Mammary epithelial cell (primary cell): ENCODE measurements at regions of chr4 and their contacts with region 1.

Region 1: DNA sequence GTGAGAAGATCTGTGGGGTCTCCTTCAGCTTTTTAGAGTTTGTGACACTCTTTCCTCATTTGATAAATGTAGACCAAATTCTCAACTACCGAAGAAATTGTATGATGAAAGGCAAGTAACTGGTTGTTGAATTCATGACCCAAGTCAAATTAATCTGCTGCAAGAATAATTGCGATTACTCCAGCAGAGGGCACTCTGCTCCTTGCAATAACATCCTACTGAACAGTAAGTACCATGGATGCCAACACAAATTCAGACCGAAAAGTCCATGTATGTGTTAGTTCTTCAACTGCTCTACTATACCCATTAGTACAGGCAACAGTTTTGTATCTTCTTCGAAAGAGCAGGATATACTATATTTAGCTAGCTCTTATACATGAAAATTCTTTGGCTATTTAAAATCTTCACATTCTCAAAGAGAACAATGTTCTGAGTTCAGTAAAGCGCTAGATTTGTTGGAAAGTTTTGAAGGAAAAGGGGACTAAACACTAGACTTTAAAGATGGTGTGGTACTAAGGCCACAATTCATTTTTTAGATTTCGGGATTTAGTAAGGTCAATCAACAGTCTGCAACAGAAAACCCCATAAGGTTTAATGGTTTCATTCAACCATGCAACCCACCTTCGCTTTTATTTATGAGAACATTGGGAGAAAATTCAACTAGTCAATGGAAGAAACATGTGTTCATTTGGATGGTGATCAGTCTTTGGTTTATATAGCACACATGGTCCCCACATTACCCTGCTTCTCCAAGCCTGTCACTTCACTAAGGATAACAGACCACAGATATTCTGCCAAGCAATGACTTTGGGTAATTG is 105.4 kb upstream of the TBC1D9 start:
- DNase-seq: peak; percentile 56
- H3K4me3 ChIP-seq: no peak overlapping the region
- H3K27ac ChIP-seq: no peak overlapping the region
- H3K4me1 ChIP-seq: peaks cover 25% of the 10 kb centered on the region
- H3K27me3 ChIP-seq: peaks cover 3% of the 10 kb centered on the region
- CTCF ChIP-seq: peak; percentile 75 to 76

Region 2: DNA sequence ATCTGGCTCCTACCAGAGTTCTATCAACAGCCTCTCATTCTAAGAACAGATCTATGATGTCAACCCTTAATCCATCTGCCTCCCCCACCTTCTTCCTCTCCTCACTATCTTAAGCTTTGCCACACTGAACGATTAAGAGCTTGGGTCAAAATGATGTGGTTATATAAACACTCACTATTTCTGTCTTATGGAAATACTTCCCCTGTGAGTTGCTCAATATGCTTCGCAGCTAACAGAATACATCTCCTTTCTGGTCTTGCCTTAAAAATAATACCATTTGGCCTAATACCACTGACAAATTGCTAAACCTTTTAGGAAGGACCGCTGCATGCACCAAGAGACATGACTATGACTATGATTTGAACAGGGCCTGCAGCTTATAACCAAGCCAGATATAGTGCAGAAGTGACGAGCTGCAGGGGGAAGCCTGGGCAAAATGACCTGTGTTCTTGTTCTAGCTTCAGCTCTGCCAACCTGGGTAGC is 140.8 kb after region 1 on chr4:
- CTCF ChIA-PET with region 1: no interaction called
- dilution Hi-C with region 1: no loop called
- in situ Hi-C with region 1: no loop called
- intact Hi-C with region 1: no loop called
- DNase-seq: no peak
- H3K4me3 ChIP-seq: no peak overlapping the region
- H3K27ac ChIP-seq: no peak overlapping the region
- H3K4me1 ChIP-seq: no peaks in the 10 kb centered on the region
- H3K27me3 ChIP-seq: peaks cover 6% of the 10 kb centered on the region
- CTCF ChIP-seq: no peak

Region 3: GRCh38 chr4:141133146-141133998 is 271.8 kb after region 1 on chr4 and contains the start of gene RNF150:
- CTCF ChIA-PET with region 1: no interaction called
- dilution Hi-C with region 1: no loop called
- in situ Hi-C with region 1: no loop called
- intact Hi-C with region 1: loop called (anchors 1 kb)
- DNase-seq: peak; percentile 63
- H3K4me3 ChIP-seq: peak within 1 kb of the TSS; percentile 35 to 63 (median 58)
- H3K27ac ChIP-seq: no peak within 1 kb of the TSS
- H3K4me1 ChIP-seq: peaks cover 13% of the 10 kb centered on the region
- H3K27me3 ChIP-seq: peaks cover 29% of the 10 kb centered on the region
- CTCF ChIP-seq: peak; percentile 32 to 65
- total RNA-seq, gene RNF150: 5.0 TPM in 1 of 2 donors, not detected in the other